MCF 10A (cell line): ENCODE measurements at regions of chr12 and their contacts with region 1.

Region 1: DNA sequence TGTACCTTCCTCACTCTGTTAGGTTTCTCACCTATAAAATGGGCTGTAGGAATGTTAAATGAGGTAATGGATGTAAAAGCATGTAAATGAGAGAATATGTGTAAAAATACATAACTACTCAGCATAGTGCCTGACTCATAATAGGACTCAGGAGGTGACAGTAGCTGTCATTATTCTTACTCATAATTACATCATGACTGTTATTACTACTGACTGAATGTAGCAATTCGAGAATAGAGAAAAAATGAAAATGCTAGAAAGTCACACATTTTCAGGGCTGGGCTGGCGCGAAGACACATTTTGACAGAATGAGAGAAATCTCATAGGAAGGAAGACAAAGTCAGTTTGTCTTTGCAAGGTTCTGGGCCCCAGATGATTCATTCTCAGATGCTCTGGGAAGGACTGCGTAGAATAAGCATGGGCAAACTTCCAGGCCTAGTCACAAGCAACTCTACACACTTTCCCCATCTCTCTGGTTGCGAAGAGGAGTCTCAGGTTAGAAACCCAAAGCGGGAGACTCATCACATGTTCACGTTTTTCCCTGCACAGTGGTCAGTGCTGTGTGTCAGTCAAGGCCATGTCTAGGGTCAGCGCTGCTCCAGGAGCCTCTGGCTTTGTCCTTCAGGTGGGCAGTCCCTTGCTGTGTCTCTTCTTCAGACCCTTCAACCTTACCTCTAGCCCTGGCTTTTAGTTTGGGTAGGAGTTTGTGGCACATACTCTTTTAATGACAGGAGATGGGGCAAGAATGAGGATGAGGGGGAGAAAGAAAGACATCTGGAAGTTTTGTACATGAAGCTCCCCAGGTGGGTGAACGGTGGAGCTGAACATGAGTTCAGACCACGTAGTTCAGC is 8.4 kb downstream of the GPRC5A start:
- DNase-seq: peak; percentile 93
- H3K4me3 Mint-ChIP-seq: peak overlapping the region; percentile 68
- H3K27ac Mint-ChIP-seq: peak overlapping the region; percentile 86
- H3K4me1 Mint-ChIP-seq: peaks cover 50% of the 10 kb centered on the region
- H3K27me3 Mint-ChIP-seq: no peaks in the 10 kb centered on the region
- CTCF ChIP-seq: no peak

Region 2: GRCh38 chr12:12946686-12947355 is 47.1 kb after region 1 on chr12:
- CTCF ChIA-PET with region 1: no interaction called
- POLR2A ChIA-PET with region 1: no interaction called
- intact Hi-C with region 1: no loop called
- DNase-seq: no peak
- H3K4me3 Mint-ChIP-seq: no peak overlapping the region
- H3K27ac Mint-ChIP-seq: no peak overlapping the region
- H3K4me1 Mint-ChIP-seq: no peaks in the 10 kb centered on the region
- H3K27me3 Mint-ChIP-seq: no peaks in the 10 kb centered on the region
- CTCF ChIP-seq: no peak

Region 3: GRCh38 chr12:12975322-12976077 is 75.7 kb after region 1 on chr12:
- CTCF ChIA-PET with region 1: interaction called, 10 read pairs
- POLR2A ChIA-PET with region 1: interaction called, 4 read pairs
- intact Hi-C with region 1: no loop called
- DNase-seq: peak; percentile 55
- H3K4me3 Mint-ChIP-seq: no peak overlapping the region
- H3K27ac Mint-ChIP-seq: peak overlapping the region; percentile 85
- H3K4me1 Mint-ChIP-seq: peaks cover 12% of the 10 kb centered on the region
- H3K27me3 Mint-ChIP-seq: no peaks in the 10 kb centered on the region
- CTCF ChIP-seq: peak; percentile 23

Region 4: DNA sequence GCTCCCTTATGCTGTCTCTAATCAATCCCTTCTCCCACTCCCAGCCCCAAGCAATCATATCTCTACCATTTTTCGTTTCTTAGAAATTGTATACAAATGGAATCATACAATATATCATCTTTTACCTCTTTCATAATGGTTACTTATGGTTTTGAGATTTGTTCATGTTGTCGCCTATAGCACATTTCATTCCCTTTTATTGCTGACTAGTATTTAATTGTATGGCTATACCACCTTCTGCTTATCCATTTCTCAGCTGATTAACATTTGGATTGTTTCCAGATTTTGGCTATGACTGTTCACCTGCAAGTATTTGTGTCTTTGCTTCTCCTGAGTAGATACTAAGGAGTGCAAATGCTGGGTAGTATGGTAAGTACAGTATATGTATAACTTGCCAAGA is 1118.3 kb after region 1 on chr12:
- CTCF ChIA-PET with region 1: no interaction called
- POLR2A ChIA-PET with region 1: no interaction called
- intact Hi-C with region 1: no loop called
- DNase-seq: no peak
- H3K4me3 Mint-ChIP-seq: no peak overlapping the region
- H3K27ac Mint-ChIP-seq: no peak overlapping the region
- H3K4me1 Mint-ChIP-seq: no peaks in the 10 kb centered on the region
- H3K27me3 Mint-ChIP-seq: no peaks in the 10 kb centered on the region
- CTCF ChIP-seq: no peak